AG04449 (cell line): ENCODE measurements at regions of chr22 and their contacts with region 1.

Region 1: GRCh38 chr22:37316875-37317371 is 34.6 kb downstream of the CYTH4 start:
- DNase-seq: no peak
- H3K4me3 ChIP-seq: no peak overlapping the region
- CTCF ChIP-seq: peak; percentile 96

Region 2: GRCh38 chr22:37242395-37242918 is 74.5 kb before region 1 on chr22:
- CTCF ChIA-PET with region 1: no interaction called
- POLR2A ChIA-PET with region 1: no interaction called
- DNase-seq: no peak
- H3K4me3 ChIP-seq: no peak overlapping the region
- CTCF ChIP-seq: no peak

Region 3: DNA sequence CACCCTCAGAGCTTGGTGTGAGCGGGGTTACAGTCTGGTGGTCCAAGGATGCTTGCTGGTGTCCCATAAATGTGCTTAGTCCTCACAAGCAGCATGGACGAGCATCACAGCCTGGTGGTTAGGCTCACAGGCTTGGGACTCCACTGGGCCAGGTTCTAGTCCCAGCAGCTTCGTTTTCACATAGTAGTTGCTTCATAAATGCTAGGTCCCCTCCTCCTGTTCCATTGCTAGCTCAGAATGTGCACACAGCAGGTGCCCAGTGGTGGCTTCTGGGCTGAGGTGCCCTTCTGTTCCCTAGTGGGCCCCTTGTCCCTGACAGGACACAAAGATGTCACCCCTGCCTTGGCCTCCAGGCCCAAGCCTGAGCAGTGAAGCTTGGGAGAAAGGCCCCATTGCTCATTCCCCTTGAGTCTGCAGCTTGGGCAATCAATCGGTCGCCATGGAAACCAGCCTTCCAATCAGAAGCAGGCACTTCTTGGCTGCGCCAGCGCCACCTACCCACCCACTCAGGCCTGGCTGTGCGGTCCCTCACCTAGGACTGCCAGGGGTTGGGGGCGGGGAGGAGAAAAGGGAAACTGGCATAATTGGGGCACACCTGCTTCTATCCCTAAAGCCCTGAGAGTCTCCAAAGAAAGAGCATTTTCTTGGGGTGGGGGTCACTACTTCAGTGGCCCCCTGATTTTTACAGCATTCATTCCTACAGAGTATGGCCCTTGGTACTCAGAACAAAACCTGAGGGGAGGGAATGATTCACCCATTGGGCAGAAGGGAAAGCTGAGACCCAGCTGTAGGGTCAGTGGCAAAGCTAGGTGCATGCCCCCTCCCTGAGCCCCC is 13.5 kb after region 1 on chr22:
- CTCF ChIA-PET with region 1: interaction called, 35 read pairs
- POLR2A ChIA-PET with region 1: interaction called, 3 read pairs
- DNase-seq: no peak
- H3K4me3 ChIP-seq: no peak overlapping the region
- CTCF ChIP-seq: peak; percentile 40

Region 4: GRCh38 chr22:37363261-37363992 is 46.5 kb after region 1 on chr22:
- CTCF ChIA-PET with region 1: no interaction called
- POLR2A ChIA-PET with region 1: no interaction called
- DNase-seq: no peak
- H3K4me3 ChIP-seq: no peak overlapping the region
- CTCF ChIP-seq: no peak

Region 5: DNA sequence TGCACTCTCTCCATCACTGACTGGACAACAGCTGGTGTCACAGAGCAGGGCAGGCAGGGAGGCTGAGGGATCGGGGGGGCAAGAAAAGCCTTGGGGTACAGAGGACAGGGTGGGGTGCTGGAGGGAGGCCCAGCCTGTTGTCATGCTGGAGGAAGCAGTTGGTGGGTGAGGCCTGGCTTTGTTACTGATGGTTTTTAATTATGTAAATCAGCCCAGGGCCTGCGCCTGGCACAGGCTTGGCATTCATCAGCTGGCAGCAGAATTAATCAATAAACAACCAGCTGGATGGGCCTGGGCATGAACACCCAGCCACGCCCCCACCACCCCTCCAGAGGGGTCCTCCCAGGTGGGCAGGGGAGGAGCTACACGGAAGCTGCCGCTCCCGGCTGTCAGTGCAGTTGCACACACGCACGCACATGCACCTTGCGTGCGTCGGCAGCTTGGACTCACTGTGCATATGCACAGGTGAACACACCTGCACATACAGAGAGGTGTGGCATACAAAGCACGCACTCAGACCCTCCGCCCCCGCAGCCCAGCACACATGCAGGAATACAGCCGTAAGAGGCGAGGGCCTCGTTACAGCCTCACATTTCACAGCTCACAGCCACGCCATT is 131.7 kb after region 1 on chr22:
- CTCF ChIA-PET with region 1: interaction called, 559 read pairs
- POLR2A ChIA-PET with region 1: no interaction called
- DNase-seq: no peak
- H3K4me3 ChIP-seq: no peak overlapping the region
- CTCF ChIP-seq: no peak

Region 6: DNA sequence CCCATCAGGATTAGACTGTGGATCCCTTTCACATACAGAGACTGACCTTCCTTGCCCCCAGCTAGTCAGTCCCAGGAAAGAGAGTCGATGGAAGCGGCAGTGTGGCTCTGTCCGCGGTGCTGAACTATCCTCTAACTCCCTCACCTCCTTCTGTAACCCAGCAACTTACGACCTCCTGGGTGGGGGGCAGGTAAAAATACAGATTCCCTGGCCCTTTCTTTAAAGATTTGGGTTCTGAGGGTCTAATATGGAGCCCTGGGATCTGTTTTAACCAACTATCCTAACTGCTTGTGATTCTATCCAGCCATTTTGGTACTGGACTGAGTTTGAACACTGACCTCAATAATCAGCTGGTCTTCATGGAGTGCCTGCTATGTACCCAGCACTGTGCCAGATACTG is 146.1 kb after region 1 on chr22:
- CTCF ChIA-PET with region 1: interaction called, 559 read pairs
- POLR2A ChIA-PET with region 1: no interaction called
- DNase-seq: no peak
- H3K4me3 ChIP-seq: no peak overlapping the region
- CTCF ChIP-seq: no peak

Region 7: GRCh38 chr22:37588546-37589215 is 271.8 kb after region 1 on chr22:
- CTCF ChIA-PET with region 1: interaction called, 21 read pairs
- POLR2A ChIA-PET with region 1: no interaction called
- DNase-seq: no peak
- H3K4me3 ChIP-seq: no peak overlapping the region
- CTCF ChIP-seq: no peak